CD4-positive, alpha-beta memory T cell (primary cell): ENCODE measurements at regions of chr14 and their contacts with region 1.

Region 1: DNA sequence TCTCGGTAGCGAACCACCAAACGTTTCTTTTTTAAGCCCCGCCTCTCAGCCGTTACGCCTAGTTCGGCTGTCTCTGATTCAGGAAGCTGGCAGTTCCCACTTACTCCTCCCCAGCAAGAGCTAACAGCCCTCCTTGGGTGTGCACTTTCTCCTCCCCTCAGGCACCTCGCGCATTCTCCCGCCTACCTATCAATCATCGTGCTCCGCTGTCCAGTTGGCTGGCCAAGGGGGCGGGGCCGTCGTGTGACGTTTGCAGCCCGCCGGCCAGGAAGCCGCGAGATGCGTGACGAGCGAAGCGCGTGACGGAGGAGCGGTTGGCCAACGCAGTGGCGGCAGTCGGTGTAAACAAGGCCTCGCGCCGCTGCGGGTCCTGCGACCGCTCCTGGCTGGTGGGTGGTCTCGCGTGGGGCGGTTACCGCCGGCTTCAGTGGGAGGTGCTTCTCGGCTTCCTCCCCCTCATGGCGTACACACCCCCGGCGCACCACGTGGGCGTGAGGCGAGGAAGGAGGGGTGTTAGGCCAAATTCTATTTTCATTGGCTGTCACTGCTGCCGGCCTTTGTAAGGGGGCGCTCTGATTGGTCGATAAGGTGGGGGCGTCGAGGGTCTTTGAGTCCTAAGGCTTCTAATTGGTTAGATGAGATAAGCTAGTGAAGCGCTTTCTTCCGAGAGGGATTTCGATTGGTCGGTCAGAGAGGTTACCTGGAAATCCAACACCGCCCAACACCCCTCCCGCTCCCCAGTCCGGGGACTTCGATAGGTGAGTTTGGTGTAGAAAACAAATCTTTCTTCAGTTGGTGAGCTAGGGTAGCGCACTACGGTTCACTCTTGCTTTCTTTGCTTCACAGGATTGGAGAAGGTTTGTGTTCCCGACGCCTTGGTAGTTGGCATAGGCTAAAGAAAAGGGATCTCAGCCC is at the starts of genes DCAF11 and NRL:
- DNase-seq: peak; percentile 100
- H3K4me3 ChIP-seq: peak within 1 kb of the TSS; percentile 97 to 98
- H3K4me3 Mint-ChIP-seq: peak within 1 kb of the TSS; percentile 95 to 99 (median 98)
- H3K27ac ChIP-seq: peak within 1 kb of the TSS; percentile 98
- H3K27ac Mint-ChIP-seq: peak within 1 kb of the TSS; percentile 98 to 100 (median 99)
- H3K4me1 ChIP-seq: peaks cover 29% of the 10 kb centered on the region
- H3K4me1 Mint-ChIP-seq: peaks cover 19 to 44% (median 30%) of the 10 kb centered on the region in 4 donors
- H3K27me3 ChIP-seq: no peaks in the 10 kb centered on the region
- H3K27me3 Mint-ChIP-seq: no peaks in the 10 kb centered on the region
- total RNA-seq, gene DCAF11: 71.5 to 75.8 TPM
- total RNA-seq, gene NRL: 2.9 to 4.5 TPM

Region 2: DNA sequence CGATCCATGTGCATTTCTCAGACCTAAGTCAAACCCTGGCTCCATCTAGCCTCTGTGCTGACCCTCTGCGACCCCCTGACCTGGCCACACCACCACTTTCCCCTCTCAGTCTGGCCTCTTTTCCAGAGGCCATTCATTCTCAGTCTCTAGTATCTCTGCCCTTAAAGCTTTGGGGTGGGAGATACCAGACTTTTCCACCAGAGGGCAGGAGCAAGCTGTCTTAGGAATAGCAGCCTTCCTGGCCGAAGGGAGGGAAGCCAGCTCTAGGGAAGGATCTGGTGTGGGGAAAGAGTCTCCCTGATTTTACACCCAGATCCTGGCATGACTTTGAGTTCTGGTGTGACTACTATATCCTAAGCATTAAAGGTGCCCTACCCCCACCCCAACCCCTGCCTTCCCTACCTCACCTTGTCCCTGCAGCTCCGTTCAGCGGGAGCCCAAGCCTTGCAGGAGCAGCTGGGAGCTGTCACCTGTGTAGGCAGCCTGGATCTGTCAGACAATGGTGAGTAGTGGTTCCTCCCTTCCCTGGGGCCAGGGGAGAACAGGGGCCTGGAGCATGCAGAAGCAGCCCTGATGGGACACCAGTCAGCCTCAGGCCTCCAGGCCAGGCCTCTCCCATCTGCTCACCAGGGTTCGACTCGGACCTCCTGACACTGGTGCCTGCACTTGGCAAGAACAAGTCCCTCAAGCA is 56.4 kb before region 1 on chr14:
- CTCF ChIA-PET with region 1: interaction called, 392 read pairs
- POLR2A ChIA-PET with region 1: interaction called, 21 read pairs
- intact Hi-C with region 1: no loop called
- DNase-seq: peak; percentile 49 to 63 (median 61)
- H3K4me3 ChIP-seq: no peak overlapping the region
- H3K4me3 Mint-ChIP-seq: peak overlapping the region in 1 of 8 donors; percentile 59
- H3K27ac ChIP-seq: no peak overlapping the region
- H3K27ac Mint-ChIP-seq: peak overlapping the region in 6 of 7 donors; percentile 10 to 81 (median 36)
- H3K4me1 ChIP-seq: no peaks in the 10 kb centered on the region
- H3K4me1 Mint-ChIP-seq: peaks cover 2 to 8% (median 3%) of the 10 kb centered on the region in 4 donors
- H3K27me3 ChIP-seq: no peaks in the 10 kb centered on the region
- H3K27me3 Mint-ChIP-seq: peaks cover 2% of the 10 kb centered on the region in 2 donors

Region 3: DNA sequence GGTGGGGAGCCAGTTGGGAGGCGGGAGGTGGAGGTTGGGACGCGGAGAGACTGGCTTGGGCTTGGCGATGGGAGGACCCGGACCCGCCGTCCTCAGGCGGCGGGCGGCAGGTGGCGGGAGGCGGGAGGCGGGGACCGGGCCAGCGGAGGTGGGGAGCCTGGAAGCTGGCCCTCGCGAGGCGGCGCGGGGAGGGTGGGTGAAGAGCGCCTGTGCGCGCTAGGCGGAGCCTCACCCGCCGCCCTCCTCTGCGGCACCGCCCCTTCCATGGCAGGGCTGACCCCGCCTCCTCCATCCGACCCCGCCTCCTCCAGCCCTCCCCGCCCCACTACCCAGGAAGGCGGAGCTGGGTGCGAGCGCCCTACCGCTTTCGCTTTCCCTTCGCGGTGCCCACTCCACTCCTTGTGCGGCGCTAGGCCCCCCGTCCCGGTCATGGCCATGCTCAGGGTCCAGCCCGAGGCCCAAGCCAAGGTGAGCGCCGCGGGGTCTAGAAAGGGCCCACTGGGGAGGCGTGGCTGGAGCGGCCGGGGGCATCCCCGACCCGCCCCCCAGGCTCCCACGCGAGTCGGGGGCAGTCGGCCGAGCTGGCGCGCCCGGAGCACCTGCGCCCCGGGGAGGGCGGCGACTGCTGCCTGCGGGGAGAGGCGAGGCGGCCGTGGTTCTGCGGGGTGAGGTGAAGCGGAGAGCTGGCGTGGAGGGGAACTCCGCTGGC is 21.2 kb after region 1 on chr14 and contains the start of gene PSME1:
- CTCF ChIA-PET with region 1: interaction called, 23 read pairs
- POLR2A ChIA-PET with region 1: interaction called, 347 read pairs
- intact Hi-C with region 1: loop called (anchors 1 kb)
- DNase-seq: peak; percentile 92 to 94 (median 93)
- H3K4me3 ChIP-seq: peak within 1 kb of the TSS; percentile 30 to 87
- H3K4me3 Mint-ChIP-seq: peak within 1 kb of the TSS; percentile 87 to 94 (median 92)
- H3K27ac ChIP-seq: peak within 1 kb of the TSS; percentile 84
- H3K27ac Mint-ChIP-seq: peak within 1 kb of the TSS; percentile 88 to 96 (median 94)
- H3K4me1 ChIP-seq: peaks cover 59% of the 10 kb centered on the region
- H3K4me1 Mint-ChIP-seq: peaks cover 35 to 70% (median 55%) of the 10 kb centered on the region in 4 donors
- H3K27me3 ChIP-seq: no peaks in the 10 kb centered on the region
- H3K27me3 Mint-ChIP-seq: no peaks in the 10 kb centered on the region
- total RNA-seq, gene PSME1: 257 to 273 TPM

Region 4: GRCh38 chr14:24160850-24161804 is 46.3 kb after region 1 on chr14 and contains the start of gene IRF9:
- CTCF ChIA-PET with region 1: interaction called, 63 read pairs
- POLR2A ChIA-PET with region 1: interaction called, 80 read pairs
- intact Hi-C with region 1: loop called (anchors 1 kb)
- DNase-seq: peak; percentile 94 to 97 (median 95)
- H3K4me3 ChIP-seq: peak within 1 kb of the TSS; percentile 73 to 97
- H3K4me3 Mint-ChIP-seq: peak within 1 kb of the TSS; percentile 96 to 100 (median 99)
- H3K27ac ChIP-seq: peak within 1 kb of the TSS; percentile 90
- H3K27ac Mint-ChIP-seq: peak within 1 kb of the TSS; percentile 97 to 100 (median 99)
- H3K4me1 ChIP-seq: peaks cover 50% of the 10 kb centered on the region
- H3K4me1 Mint-ChIP-seq: peaks cover 29 to 60% (median 48%) of the 10 kb centered on the region in 4 donors
- H3K27me3 ChIP-seq: no peaks in the 10 kb centered on the region
- H3K27me3 Mint-ChIP-seq: no peaks in the 10 kb centered on the region
- total RNA-seq, gene IRF9: 154 to 157 TPM

Region 5: GRCh38 chr14:24215495-24216344 is 100.9 kb after region 1 on chr14 and contains the start of gene MDP1:
- CTCF ChIA-PET with region 1: interaction called, 6 read pairs
- POLR2A ChIA-PET with region 1: interaction called, 46 read pairs
- intact Hi-C with region 1: loop called (anchors 2 kb)
- DNase-seq: peak; percentile 86 to 92 (median 88)
- H3K4me3 ChIP-seq: peak within 1 kb of the TSS; percentile 94 to 95
- H3K4me3 Mint-ChIP-seq: peak within 1 kb of the TSS; percentile 90 to 97 (median 93)
- H3K27ac ChIP-seq: peak within 1 kb of the TSS; percentile 100
- H3K27ac Mint-ChIP-seq: peak within 1 kb of the TSS; percentile 95 to 100 (median 99)
- H3K4me1 ChIP-seq: peaks cover 42% of the 10 kb centered on the region
- H3K4me1 Mint-ChIP-seq: peaks cover 30 to 56% (median 44%) of the 10 kb centered on the region in 4 donors
- H3K27me3 ChIP-seq: no peaks in the 10 kb centered on the region
- H3K27me3 Mint-ChIP-seq: no peaks in the 10 kb centered on the region
- total RNA-seq, gene MDP1: 12.5 to 15.3 TPM

Region 6: DNA sequence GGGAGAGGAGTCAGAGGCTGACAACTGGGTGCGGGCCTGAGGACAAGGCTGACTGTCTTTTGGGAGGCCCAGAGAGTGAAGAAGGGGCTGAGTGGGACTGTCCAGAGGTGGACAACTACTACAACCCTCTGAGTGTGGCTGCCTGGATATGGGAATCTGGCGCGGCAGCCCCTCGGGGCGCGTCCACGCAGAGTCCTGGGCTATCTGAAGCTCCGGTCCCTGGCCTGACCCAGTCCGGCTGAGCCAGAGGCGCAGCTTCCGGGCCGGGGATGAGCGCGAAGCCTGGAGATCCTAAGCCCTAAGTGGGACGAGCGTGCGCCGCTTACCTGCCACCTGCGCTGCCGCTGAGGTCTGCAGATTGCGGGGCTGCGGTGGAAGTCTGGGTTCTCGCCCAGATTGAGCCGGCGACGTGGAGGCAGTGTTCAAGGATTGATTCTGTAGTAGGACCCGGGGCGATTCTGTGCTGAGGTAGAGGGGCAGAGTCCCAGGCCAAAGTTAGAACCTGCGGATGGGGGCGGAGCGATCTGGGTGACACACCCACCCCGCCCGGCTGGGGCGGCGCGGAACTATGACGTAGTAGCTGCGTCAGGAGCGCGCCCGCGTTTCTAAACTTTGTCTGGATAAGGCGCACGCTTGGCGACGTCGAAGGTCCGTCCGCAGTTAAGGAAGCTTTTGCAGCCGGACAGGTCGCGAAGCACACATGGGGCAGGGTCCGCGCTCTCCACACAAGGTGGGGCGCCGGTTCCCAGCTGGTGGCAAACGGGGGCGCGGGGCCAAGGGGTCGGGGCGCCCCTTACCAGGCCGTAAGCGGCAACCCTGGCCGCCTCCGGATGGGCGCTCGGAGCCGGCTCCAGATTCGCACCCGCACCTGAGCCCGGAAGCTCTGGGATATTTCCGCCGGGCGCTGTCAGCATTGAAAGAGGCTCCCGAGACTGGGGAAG is 184.7 kb after region 1 on chr14 and contains the starts of genes DHRS1 and NOP9:
- CTCF ChIA-PET with region 1: interaction called, 10 read pairs
- POLR2A ChIA-PET with region 1: interaction called, 6 read pairs
- intact Hi-C with region 1: loop called (anchors 1 kb)
- DNase-seq: peak; percentile 89 to 92 (median 90)
- H3K4me3 ChIP-seq: peak within 1 kb of the TSS; percentile 77 to 85
- H3K4me3 Mint-ChIP-seq: peak within 1 kb of the TSS; percentile 91 to 99 (median 94)
- H3K27ac ChIP-seq: peak within 1 kb of the TSS; percentile 87
- H3K27ac Mint-ChIP-seq: peak within 1 kb of the TSS; percentile 96 to 99 (median 98)
- H3K4me1 ChIP-seq: peaks cover 42% of the 10 kb centered on the region
- H3K4me1 Mint-ChIP-seq: peaks cover 32 to 66% (median 51%) of the 10 kb centered on the region in 4 donors
- H3K27me3 ChIP-seq: no peaks in the 10 kb centered on the region
- H3K27me3 Mint-ChIP-seq: no peaks in the 10 kb centered on the region
- total RNA-seq, gene DHRS1: 37.6 to 38.6 TPM
- total RNA-seq, gene NOP9: 23.1 to 28.1 TPM